ENCODE measurements at regions of chr21 and their contacts with region 1.

Region 1: GRCh38 chr21:33360881-33361602 is 36.3 kb downstream of the IFNAR1 start:
- DNase-seq: peak; percentile 90
- ATAC-seq: peak; percentile 77
- H3K4me3 Mint-ChIP-seq: peak overlapping the region; percentile 86
- H3K27ac Mint-ChIP-seq: peak overlapping the region; percentile 55
- H3K4me1 Mint-ChIP-seq: peaks cover 22% of the 10 kb centered on the region
- H3K27me3 Mint-ChIP-seq: no peaks in the 10 kb centered on the region

Region 2: GRCh38 chr21:33266050-33266788 is 94.8 kb before region 1 on chr21 and contains the start of gene IL10RB:
- POLR2A ChIA-PET with region 1: interaction called, 10 read pairs
- DNase-seq: peak; percentile 88
- ATAC-seq: peak; percentile 77
- H3K4me3 Mint-ChIP-seq: peak within 1 kb of the TSS; percentile 97
- H3K27ac Mint-ChIP-seq: peak within 1 kb of the TSS; percentile 88
- H3K4me1 Mint-ChIP-seq: peaks cover 44% of the 10 kb centered on the region
- H3K27me3 Mint-ChIP-seq: no peaks in the 10 kb centered on the region
- total RNA-seq, gene IL10RB: 40.6 to 44.1 TPM

Region 3: GRCh38 chr21:33374450-33375096 is 13.5 kb after region 1 on chr21:
- POLR2A ChIA-PET with region 1: interaction called, 20 read pairs
- DNase-seq: peak; percentile 48
- ATAC-seq: peak; percentile 81
- H3K4me3 Mint-ChIP-seq: no peak overlapping the region
- H3K27ac Mint-ChIP-seq: no peak overlapping the region
- H3K4me1 Mint-ChIP-seq: peaks cover 16% of the 10 kb centered on the region
- H3K27me3 Mint-ChIP-seq: peaks cover 22% of the 10 kb centered on the region

Region 4: DNA sequence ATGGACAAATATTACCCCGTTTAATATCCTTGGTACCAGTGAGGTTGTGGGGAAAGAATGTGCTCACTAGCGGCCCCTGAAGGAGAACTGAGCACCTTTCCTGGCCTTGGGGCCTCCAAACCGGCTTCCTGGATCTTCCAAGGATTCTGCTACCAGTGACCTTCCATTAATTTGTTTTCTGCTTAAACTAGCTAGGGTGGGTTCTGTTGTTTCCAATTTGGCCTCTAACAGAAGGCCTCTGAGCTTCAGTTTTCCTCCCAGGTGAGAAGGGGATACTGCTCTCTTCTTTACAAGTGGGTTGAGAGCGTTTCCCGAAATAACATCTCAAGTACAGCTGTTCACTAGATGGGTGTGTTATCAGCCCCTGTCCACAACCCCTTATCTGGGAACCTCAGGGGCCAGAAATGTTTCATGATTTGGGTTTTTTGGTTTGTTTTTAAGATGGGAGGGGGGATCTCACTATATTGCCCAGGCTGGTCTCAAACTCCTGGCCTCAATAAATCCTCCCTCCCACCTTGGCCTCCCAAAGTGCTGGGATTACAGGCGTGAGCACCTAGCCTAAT is 25.3 kb after region 1 on chr21:
- POLR2A ChIA-PET with region 1: interaction called, 20 read pairs
- DNase-seq: no peak
- ATAC-seq: no peak
- H3K4me3 Mint-ChIP-seq: no peak overlapping the region
- H3K27ac Mint-ChIP-seq: no peak overlapping the region
- H3K4me1 Mint-ChIP-seq: peaks cover 37% of the 10 kb centered on the region
- H3K27me3 Mint-ChIP-seq: peaks cover 32% of the 10 kb centered on the region

Region 5: DNA sequence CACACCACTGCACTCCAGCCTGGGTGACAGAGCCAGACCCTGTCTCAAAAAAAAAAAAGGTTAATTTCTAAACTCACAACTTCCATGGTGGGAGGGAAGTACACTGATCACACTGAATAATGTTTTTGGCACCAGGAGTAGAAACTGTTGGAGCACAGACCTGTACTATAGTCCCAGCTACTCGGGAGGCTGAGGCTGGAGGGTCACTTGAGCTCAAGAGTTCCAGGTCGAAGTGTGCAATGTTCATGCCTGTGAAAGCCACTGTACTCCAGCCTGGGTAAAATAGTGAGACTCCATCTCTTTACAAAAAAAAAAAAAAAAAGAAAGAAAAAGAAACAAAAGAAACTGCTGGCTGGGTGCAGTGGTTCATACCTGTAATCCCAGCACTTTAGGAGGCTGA is 83.5 kb after region 1 on chr21:
- POLR2A ChIA-PET with region 1: interaction called, 12 read pairs
- DNase-seq: no peak
- ATAC-seq: no peak
- H3K4me3 Mint-ChIP-seq: no peak overlapping the region
- H3K27ac Mint-ChIP-seq: no peak overlapping the region
- H3K4me1 Mint-ChIP-seq: peaks cover 15% of the 10 kb centered on the region
- H3K27me3 Mint-ChIP-seq: no peaks in the 10 kb centered on the region

Measured in activated naive CD8-positive, alpha-beta T cell treated with anti-CD3 and anti-CD28 coated beads, Interleukin-2, amount 10 ng/mL, durations not matched to agents 7 days and 5 days (primary cell).